ENCODE measurements at regions of chr11 and their contacts with region 1.

Region 1: GRCh38 chr11:61152816-61153592 is 8.2 kb downstream of the VPS37C start:
- DNase-seq: no peak
- CTCF ChIP-seq: no peak

Region 2: DNA sequence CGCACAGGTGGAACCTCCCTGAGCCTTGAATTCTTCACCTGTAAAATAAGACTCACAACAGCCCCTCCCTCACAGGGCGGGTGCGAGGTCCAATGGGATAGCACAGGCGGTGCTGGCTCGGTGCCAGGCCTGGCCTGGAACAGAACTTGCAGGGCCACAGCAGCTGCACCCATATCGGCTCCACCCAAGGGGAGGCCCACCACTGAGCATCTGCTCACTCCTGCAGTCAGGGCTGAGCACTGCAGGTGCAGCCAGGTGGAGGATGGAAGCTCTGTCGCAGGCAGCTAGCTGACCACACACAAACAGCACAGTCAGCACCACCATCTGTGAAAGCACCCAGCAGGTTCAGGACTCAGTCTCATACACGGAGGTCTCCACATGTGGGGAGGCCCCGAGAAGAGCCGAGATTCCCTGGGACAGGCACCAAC is 11.4 kb before region 1 on chr11:
- CTCF ChIA-PET with region 1: interaction called, 10 read pairs
- POLR2A ChIA-PET with region 1: no interaction called
- DNase-seq: no peak
- CTCF ChIP-seq: no peak

Region 3: GRCh38 chr11:61667684-61668305 is 514.8 kb after region 1 on chr11:
- CTCF ChIA-PET with region 1: no interaction called
- POLR2A ChIA-PET with region 1: no interaction called
- DNase-seq: no peak
- CTCF ChIP-seq: no peak